Activated naive CD4-positive, alpha-beta T cell treated with anti-CD3 and anti-CD28 coated beads for 36 hours (primary cell): ENCODE measurements at regions of chr10 and their contacts with region 1.

Region 1: GRCh38 chr10:101067356-101068083 is 5.7 kb downstream of the KAZALD1 start:
- DNase-seq: peak; percentile 90
- H3K4me3 Mint-ChIP-seq: peak overlapping the region; percentile 66
- H3K27ac Mint-ChIP-seq: no peak overlapping the region
- H3K4me1 Mint-ChIP-seq: peaks cover 23% of the 10 kb centered on the region
- H3K27me3 Mint-ChIP-seq: peaks cover 40% of the 10 kb centered on the region

Region 2: DNA sequence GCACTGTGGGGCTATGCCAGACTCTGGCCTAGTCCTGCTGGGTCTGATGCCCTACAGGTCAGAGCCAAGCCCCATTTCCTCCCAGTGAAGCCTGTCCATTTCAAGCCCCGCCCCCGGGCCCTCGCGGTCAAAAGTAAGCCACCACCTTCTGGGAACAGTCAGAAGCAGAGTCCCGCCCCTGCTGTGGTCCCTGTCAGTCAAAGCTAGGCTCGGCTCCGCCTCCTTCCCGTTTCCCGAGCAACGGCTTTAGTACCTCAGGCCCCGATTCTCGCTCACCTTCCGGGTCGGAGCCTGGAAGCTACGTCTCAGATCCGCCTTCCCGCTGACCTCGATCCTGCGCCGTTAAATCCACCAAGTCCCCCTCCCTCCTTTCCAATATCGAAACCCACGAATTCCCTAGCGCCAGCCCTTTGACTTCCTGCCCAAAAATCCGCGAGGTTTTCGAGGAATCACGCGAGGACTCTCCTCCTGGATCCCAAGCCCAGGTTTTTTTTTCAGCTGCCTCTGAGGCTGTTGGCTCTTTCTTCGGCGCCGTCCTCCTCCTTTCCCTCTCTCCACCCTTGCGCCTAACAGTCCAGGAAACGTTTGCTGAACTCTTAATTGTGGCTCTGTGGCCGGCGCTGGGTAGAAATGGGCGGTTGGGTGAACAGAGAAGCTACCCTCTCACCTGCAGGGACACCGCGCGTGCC is 24.7 kb before region 1 on chr10:
- CTCF ChIA-PET with region 1: interaction called, 326 read pairs
- intact Hi-C with region 1: loop called (anchors 1 kb)
- DNase-seq: peak; percentile 97
- H3K4me3 Mint-ChIP-seq: peak overlapping the region; percentile 91
- H3K27ac Mint-ChIP-seq: peak overlapping the region; percentile 74
- H3K4me1 Mint-ChIP-seq: peaks cover 22% of the 10 kb centered on the region
- H3K27me3 Mint-ChIP-seq: peaks cover 17% of the 10 kb centered on the region

Region 3: DNA sequence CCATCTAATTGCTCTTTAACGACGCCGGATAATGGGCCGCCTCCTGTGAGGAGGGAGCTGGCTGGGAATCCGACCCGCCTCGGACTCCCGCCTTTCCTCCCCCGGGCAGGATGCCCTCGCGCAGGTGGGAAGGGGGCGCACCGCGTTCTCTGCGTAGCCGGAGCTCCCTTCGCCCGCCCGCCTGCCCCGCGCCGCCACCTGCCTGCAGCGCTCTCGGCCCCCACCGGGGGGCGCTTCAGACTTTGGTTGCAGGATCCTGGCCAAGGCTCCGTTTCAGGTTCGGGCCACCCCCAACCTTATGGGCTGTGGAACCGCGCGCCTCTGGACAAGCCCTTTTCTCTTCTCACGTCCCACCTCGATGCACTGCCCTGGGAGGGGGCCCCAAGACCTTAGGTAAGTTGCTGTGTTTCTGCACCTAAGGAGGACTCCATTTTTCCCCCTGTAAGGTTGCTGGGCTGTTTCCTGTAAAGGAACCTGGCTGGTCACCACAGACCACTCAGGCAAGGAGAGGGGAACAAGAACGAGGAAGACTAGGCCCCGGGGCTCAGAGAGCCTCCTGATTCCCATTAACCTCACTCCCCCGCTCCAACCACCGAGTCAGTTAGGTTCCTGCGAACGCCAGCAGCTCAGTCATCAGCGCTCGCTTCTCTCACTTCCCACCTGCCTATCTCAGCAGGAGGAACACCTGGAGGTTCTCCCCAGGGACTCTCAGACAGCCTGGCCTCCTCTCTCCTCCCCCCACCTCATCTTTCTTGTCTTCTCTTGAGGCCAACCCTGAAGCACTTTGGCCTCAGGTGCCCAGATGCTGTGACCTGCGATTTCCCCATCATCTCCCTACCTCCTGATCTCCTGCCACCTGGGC is 17.1 kb before region 1 on chr10:
- CTCF ChIA-PET with region 1: interaction called, 326 read pairs
- intact Hi-C with region 1: loop called (anchors 1 kb)
- DNase-seq: peak; percentile 81
- H3K4me3 Mint-ChIP-seq: no peak overlapping the region
- H3K27ac Mint-ChIP-seq: no peak overlapping the region
- H3K4me1 Mint-ChIP-seq: peaks cover 9% of the 10 kb centered on the region
- H3K27me3 Mint-ChIP-seq: peaks cover 48% of the 10 kb centered on the region

Region 4: DNA sequence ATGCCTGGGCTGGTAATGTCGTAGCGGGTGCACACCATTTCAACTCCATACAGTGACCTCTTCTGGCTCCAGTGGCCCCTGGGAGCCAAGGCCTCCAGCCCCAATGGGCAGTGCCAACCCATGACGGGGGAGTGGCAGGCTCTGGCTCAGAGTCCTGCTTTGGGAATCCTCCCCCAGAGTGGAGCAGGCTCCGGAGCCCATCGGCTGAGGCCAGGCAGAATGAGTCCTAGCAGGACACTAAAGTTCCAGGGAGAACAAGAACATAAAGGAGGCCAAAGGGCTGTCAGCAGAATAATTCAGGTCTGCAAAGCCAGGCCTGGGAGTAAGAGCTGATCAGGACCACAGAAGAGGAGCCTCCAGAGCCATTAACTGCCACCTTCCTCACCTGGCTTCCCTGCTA is 128.4 kb after region 1 on chr10:
- CTCF ChIA-PET with region 1: no interaction called
- intact Hi-C with region 1: no loop called
- DNase-seq: no peak
- H3K4me3 Mint-ChIP-seq: no peak overlapping the region
- H3K27ac Mint-ChIP-seq: no peak overlapping the region
- H3K4me1 Mint-ChIP-seq: no peaks in the 10 kb centered on the region
- H3K27me3 Mint-ChIP-seq: peaks cover 7% of the 10 kb centered on the region